ENCODE measurements at regions of chr16 and their contacts with region 1.

Region 1: GRCh38 chr16:25224731-25225319 is 8.1 kb downstream of the AQP8 start:
- DNase-seq: no peak
- H3K4me3 ChIP-seq: no peak overlapping the region
- H3K27ac ChIP-seq: no peak overlapping the region
- H3K27me3 ChIP-seq: no peaks in the 10 kb centered on the region
- CTCF ChIP-seq: no peak

Region 2: DNA sequence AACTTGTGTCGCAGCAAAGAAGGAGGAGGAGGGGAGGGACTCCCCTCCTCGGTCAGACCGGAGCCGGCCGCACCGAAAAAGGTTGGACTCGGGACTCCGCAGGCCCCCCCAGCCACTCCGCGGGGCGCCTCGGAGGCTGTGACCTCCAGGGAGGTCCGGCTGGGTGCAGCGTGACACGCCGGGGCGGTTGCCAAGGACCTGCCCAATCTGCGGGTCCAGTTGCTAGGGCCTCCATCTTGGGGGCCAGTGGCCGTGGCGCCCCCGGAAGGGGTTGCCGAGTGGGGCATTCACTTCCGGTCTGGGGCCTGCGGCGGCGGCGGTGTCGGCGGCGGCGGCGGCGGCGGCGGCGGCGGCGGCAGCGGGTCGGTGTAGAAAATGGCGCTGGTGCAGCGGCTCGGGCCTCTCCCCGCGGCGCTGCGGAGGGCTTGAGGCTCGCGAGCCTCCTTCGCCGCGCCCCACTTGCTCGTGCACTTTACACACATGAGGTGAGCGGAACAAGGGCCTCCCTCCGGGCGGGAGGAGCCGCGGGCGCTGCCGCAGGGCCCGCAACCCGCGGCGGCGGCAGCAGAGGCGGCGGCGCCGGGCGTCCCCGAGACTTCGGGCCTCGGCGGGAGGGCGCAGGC is 495.4 kb before region 1 on chr16 and contains the start of gene TNRC6A:
- intact Hi-C with region 1: loop called in 1 of 2 experiments (anchors 5 kb)
- DNase-seq: peak; percentile 74 to 92 (median 84)
- H3K4me3 ChIP-seq: peak within 1 kb of the TSS; percentile 58 to 97 (median 85)
- H3K27ac ChIP-seq: peak within 1 kb of the TSS; percentile 81 to 99 (median 95)
- H3K27me3 ChIP-seq: no peaks in the 10 kb centered on the region
- CTCF ChIP-seq: peak in 21 of 56 donors; percentile 3 to 38 (median 21)
- total RNA-seq, gene TNRC6A: 88.7 to 202 (median 140) TPM

Region 3: DNA sequence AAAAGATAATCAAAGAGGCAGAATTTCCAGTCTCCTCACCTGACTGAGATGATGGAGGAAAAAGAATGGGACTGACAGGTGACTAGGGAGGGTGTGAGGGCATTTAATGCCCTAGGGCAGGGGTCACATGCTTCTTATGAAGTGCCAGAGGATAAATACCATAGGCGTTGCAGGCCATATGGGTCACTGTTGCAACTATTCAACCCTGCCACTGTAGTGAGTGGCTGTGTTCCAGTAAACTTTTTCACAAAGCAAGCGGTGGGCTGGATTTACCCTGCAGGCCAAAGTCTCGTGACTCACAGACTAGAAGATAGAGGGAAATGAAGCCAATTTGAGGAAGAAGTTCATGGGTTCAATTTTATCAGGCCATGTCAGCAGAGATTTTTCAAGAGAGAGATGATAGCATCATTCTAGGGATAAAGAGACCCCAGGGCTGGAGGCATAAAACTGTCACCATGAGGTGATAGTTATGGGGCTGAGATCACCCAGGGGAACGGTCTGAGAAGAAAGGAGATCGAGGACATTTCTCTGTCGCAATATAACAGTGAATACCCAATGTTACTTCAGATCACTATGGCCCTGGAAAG is 218.3 kb before region 1 on chr16:
- intact Hi-C with region 1: no loop called
- DNase-seq: no peak
- H3K4me3 ChIP-seq: no peak overlapping the region
- H3K27ac ChIP-seq: peak overlapping the region in 6 of 59 donors; percentile 2 to 28 (median 16)
- H3K27me3 ChIP-seq: no peaks in the 10 kb centered on the region
- CTCF ChIP-seq: no peak

Region 4: DNA sequence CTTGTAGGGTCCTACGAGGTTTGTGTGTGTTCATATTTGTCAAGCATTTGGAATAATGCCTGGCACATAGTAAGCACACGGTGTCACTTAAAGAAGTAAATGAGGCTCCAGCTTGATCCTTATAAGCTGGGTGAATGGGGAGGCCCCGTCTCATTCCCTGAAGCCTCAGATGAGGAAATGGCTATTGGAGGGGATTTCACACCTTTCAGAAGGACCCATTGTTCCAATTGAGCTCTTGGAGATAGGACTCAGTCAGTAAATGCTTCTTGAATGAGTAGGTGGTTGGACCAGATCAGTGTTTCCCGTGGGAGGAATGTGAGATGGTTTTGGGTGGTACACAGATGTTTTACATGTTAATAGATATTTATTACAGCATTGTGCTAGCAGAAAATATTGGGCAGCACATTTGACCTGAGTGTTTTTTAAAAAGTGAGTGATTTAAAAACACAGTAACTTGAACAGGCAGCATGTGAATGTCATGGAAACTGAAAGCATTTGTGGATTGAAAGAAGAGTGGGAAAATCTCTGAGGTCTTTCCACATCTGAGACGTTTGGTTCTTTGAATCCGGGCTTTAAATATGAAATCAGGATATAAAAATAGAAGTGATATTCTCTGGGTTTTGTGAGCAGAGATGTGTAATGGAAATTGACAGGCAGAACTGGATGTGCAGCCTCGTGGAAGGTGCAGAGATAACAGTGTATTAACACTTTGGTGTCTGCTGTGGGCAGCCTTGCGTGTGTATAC is 173.2 kb before region 1 on chr16:
- intact Hi-C with region 1: loop called in 1 of 2 experiments (anchors 5 kb)
- DNase-seq: no peak
- H3K4me3 ChIP-seq: peak overlapping the region in 36 of 59 donors; percentile 1 to 45 (median 26)
- H3K27ac ChIP-seq: peak overlapping the region in 44 of 59 donors; percentile 2 to 84 (median 40)
- H3K27me3 ChIP-seq: no peaks in the 10 kb centered on the region
- CTCF ChIP-seq: no peak

Region 5: DNA sequence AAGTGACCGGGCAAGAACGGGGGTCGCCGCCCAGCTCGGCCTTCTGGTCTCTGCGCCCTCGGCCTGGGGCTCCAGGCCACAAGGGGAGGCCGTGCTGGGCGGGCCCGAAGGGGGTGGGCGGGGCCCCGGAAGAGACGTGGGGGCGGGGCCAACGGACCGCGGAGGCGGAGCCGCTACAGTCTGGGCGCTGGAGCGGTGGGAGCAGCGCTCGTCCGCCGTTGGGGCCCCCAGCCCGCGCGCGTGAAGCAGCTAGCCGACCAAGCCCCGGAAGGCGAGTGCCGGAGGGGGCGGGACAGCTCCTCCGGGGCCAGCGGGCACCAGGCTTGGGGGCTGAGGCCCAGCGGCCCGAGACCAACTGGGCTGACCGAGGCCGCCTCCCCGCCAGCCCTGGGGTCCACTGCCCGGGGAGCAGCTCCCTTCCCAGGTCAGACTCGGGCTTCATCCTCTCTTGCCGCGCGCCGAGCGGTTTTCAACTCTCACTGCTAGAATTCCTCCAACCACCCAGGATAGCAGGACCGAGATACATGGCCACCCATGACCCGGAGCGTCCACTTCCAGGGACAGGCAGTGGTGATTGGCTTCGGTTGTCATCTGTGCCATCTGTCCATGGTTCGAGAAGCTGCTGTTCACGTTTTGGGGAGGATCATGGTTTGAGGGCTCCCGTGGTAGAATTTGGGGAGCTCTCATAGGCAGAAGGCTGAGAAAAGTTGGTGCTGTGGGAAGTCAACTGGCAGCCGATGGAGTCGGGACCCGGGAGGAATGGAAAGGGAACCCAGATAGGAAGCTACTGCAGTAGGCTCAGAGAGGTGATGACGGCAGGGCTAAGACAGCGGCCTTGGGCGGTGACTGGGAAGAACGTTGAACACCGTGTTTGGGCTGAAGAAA is 157.8 kb before region 1 on chr16:
- intact Hi-C with region 1: loop called in 1 of 2 experiments (anchors 10 kb)
- DNase-seq: peak; percentile 65 to 82 (median 70)
- H3K4me3 ChIP-seq: peak overlapping the region; percentile 60 to 97 (median 84)
- H3K27ac ChIP-seq: peak overlapping the region in 58 of 59 donors; percentile 14 to 92 (median 80)
- H3K27me3 ChIP-seq: no peaks in the 10 kb centered on the region
- CTCF ChIP-seq: peak in 24 of 56 donors; percentile 12 to 49 (median 22)

Measured in dorsolateral prefrontal cortex (tissue), 120 donors.